ENCODE measurements at regions of chr14 and their contacts with region 1.

Region 1: GRCh38 chr14:77376771-77377501 is at the starts of genes SAMD15 and TMED8:
- DNase-seq: peak; percentile 43 to 68
- ATAC-seq: peak; percentile 97 to 98
- H3K4me3 ChIP-seq: peak within 1 kb of the TSS; percentile 85 to 99 (median 86)
- H3K27ac ChIP-seq: peak within 1 kb of the TSS; percentile 64 to 76 (median 74)
- H3K4me1 ChIP-seq: peaks cover 11 to 12% of the 10 kb centered on the region in 2 donors
- H3K27me3 ChIP-seq: no peaks in the 10 kb centered on the region
- CTCF ChIP-seq: peak in 3 of 5 experiments; percentile 26 to 53 (median 50)
- POLR2A ChIP-seq: no peak
- total RNA-seq, gene SAMD15: 0.11 TPM in 1 of 4 donors, not detected in the others
- total RNA-seq, gene TMED8: 3.0 to 5.2 (median 4.3) TPM

Region 2: GRCh38 chr14:76977793-76978720 is 398.9 kb before region 1 on chr14:
- in situ Hi-C with region 1: no loop called
- intact Hi-C with region 1: no loop called
- DNase-seq: peak in 1 of 2 donors; percentile 37
- ATAC-seq: no peak
- H3K4me3 ChIP-seq: no peak overlapping the region
- H3K27ac ChIP-seq: no peak overlapping the region
- H3K4me1 ChIP-seq: no peaks in the 10 kb centered on the region
- H3K27me3 ChIP-seq: no peaks in the 10 kb centered on the region
- CTCF ChIP-seq: no peak
- POLR2A ChIP-seq: no peak

Region 3: GRCh38 chr14:77320238-77320935 is 56.5 kb before region 1 on chr14 and contains the start of gene POMT2:
- in situ Hi-C with region 1: no loop called
- intact Hi-C with region 1: loop called (anchors 1 kb)
- DNase-seq: peak; percentile 94
- ATAC-seq: peak; percentile 56 to 63
- H3K4me3 ChIP-seq: peak within 1 kb of the TSS; percentile 79 to 100 (median 82)
- H3K27ac ChIP-seq: peak within 1 kb of the TSS; percentile 95 to 99 (median 97)
- H3K4me1 ChIP-seq: peaks cover 47 to 49% of the 10 kb centered on the region in 2 donors
- H3K27me3 ChIP-seq: no peaks in the 10 kb centered on the region
- CTCF ChIP-seq: peak in 4 of 5 experiments; percentile 50 to 82 (median 70)
- POLR2A ChIP-seq: peak; percentile 89 to 90
- total RNA-seq, gene POMT2: 27.0 to 33.2 (median 28.9) TPM